Activated B cell treated with CpG ODN at 0.5 μM for 24 hours (primary cell): ENCODE measurements at regions of chr14 and their contacts with region 1.

Region 1: DNA sequence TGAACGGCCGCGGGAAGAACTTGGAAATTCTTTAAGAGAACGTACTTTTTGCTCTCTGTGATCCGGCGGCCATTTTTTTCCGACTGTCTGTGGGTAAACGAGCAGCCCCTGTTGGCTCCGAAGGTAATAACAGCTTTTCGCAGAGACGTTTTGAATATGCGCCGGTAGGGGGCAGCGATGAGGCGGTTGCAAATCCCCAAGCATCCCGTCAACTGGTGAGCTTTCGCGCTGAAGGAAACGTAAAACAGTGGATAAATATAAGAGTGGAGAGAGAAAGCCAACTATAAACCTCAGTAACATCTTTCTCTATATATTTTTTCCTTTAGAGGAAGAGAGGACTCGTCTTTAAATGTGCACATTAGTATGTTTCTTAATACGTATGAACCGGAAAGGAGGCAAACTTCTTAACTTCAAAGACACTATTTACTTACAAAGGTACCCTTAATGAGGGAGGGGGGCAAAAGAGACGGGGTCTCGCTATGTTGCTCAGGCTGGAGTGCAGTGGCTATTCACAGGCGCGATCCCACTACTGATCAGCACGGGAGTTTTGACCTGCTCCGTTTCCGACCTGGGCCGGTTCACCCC is 9.6 kb upstream of the NEMF start:
- DNase-seq: peak; percentile 77
- ATAC-seq: peak; percentile 39
- H3K4me3 Mint-ChIP-seq: no peak overlapping the region
- H3K27ac Mint-ChIP-seq: no peak overlapping the region
- H3K4me1 Mint-ChIP-seq: peaks cover 33% of the 10 kb centered on the region
- H3K27me3 Mint-ChIP-seq: peaks cover 2% of the 10 kb centered on the region
- CTCF ChIP-seq: peak; percentile 100

Region 2: DNA sequence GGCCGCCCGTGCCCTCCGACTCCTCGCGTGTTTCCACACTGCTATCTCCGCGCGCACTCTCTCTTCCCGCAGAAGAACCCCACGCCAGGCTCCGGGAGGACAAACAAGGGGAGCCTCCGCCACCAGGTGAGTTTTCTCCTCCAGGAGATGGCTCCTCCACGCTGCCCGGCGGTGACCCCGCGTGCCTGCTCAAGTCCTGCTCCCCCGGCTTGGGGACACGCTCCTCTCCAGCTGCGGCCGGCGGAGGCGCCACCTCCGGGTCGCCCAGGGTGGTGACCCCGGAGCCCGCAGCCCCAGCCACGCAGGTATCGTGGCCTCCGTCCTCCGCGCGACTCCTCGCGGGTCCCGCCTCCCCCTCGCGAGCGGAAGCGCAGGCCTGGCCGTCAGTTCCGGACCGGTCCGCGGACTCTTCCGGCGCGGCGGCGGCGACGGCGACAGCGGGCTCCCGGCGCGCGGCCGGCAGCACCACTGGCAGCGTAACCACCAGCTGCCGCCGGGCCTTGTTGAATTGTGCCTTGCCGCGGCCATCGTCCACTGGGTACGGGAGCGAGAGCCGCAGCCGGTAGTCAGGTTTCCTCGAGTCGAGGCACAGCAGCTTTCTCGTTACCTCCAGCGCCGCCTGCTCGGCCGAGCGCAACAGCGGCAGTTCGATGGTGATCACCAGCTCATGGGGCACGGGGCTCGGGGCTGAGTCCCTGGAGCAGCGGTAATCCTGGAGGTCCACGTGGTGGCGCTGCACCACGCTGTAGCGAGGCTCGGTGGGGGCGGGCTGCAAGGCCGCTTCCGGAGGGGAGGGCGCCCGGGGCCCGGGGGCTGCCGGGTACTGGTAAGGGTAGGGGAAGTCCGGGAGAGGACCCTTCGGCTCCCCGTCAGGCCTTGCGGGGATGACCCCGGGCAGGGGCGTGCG is 228.3 kb before region 1 on chr14:
- CTCF ChIA-PET with region 1: interaction called, 6 read pairs
- POLR2A ChIA-PET with region 1: interaction called, 13 read pairs
- intact Hi-C with region 1: no loop called
- DNase-seq: peak; percentile 92
- ATAC-seq: peak; percentile 80
- H3K4me3 Mint-ChIP-seq: peak overlapping the region; percentile 96
- H3K27ac Mint-ChIP-seq: peak overlapping the region; percentile 98
- H3K4me1 Mint-ChIP-seq: peaks cover 66% of the 10 kb centered on the region
- H3K27me3 Mint-ChIP-seq: no peaks in the 10 kb centered on the region
- CTCF ChIP-seq: no peak

Region 3: GRCh38 chr14:49930720-49931119 is 68.5 kb after region 1 on chr14:
- CTCF ChIA-PET with region 1: interaction called, 3 read pairs
- POLR2A ChIA-PET with region 1: interaction called, 6 read pairs
- intact Hi-C with region 1: loop called (anchors 2 kb)
- DNase-seq: no peak
- ATAC-seq: no peak
- H3K4me3 Mint-ChIP-seq: peak overlapping the region; percentile 40
- H3K27ac Mint-ChIP-seq: peak overlapping the region; percentile 88
- H3K4me1 Mint-ChIP-seq: peaks cover 34% of the 10 kb centered on the region
- H3K27me3 Mint-ChIP-seq: no peaks in the 10 kb centered on the region
- CTCF ChIP-seq: no peak

Region 4: GRCh38 chr14:50008562-50009350 is 146.6 kb after region 1 on chr14:
- CTCF ChIA-PET with region 1: interaction called, 90 read pairs
- POLR2A ChIA-PET with region 1: interaction called, 190 read pairs
- intact Hi-C with region 1: loop called (anchors 1 kb)
- DNase-seq: no peak
- ATAC-seq: peak; percentile 74
- H3K4me3 Mint-ChIP-seq: peak overlapping the region; percentile 13
- H3K27ac Mint-ChIP-seq: peak overlapping the region; percentile 84
- H3K4me1 Mint-ChIP-seq: peaks cover 64% of the 10 kb centered on the region
- H3K27me3 Mint-ChIP-seq: no peaks in the 10 kb centered on the region
- CTCF ChIP-seq: no peak

Region 5: DNA sequence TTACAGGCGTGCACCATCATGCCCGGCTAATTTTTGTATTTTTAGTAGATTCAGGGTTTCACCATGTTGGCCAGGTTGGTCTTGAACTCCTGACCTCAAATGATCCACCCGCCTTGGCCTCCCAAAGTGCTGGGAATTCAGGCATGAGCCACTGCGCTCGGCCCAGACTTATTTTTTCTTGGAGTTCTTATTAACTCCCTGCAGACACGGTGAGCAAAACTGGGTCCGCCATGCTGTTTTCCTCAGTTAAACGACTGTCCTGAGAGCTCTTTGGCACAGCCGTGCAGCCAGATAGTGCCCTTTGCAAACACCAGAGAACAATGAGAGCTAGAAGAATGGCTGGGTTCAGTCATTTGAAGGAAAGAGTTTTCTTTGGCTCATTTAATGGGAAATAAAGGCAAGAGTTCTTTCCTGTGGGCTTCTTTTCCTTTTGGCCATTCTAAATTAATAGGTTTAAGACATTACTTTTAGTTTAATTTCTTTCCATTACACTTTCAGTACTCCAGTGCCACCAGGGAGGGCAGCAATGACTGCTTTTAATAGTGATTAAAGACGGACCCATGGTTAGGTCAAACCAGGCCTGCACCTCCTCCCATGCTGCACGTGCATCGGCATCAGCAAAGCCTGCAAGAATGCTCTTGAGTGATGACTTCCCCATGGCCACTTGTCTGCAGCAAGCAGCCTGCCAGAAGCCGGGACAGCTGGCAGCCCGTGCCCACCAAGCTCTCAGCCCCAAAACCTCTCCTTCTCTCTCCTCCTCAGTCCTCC is 193.5 kb after region 1 on chr14:
- CTCF ChIA-PET with region 1: interaction called, 5 read pairs
- POLR2A ChIA-PET with region 1: interaction called, 156 read pairs
- intact Hi-C with region 1: no loop called
- DNase-seq: no peak
- ATAC-seq: peak; percentile 90
- H3K4me3 Mint-ChIP-seq: no peak overlapping the region
- H3K27ac Mint-ChIP-seq: peak overlapping the region; percentile 78
- H3K4me1 Mint-ChIP-seq: peaks cover 42% of the 10 kb centered on the region
- H3K27me3 Mint-ChIP-seq: no peaks in the 10 kb centered on the region
- CTCF ChIP-seq: no peak

Region 6: DNA sequence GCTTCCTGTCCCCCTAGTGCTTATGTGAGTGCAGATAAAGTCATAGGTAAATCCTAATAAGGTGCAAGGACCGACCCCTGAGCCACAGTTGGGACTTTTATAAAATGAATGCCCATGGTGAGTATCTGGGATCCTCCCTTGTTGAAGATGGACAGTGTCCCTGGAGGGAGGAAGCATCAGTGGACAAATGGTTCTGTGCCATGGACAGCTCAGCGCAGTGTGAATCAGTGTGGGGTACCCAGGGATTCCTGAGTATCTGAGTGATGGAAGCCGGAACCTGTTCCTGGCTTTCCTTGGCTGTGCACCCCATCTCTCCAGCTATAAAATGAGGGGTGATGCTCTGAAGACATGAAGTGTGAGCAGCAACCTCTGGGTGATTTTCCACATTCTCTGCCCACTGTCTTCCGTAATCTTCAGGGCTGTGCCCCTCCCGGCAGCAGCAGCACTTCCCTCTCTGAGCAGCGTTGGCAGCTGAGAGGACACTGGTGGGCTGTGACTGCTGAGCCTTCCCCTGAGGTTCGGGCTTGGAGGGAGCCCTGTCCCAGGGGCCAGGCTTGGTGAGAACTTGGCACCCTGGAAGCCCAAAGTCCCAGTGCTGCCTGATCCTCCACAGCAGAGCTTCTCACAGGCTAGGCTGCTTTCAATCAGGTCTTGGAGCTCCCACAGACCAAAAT is 229.2 kb after region 1 on chr14:
- CTCF ChIA-PET with region 1: interaction called, 14 read pairs
- POLR2A ChIA-PET with region 1: interaction called, 38 read pairs
- intact Hi-C with region 1: no loop called
- DNase-seq: no peak
- ATAC-seq: peak; percentile 64
- H3K4me3 Mint-ChIP-seq: peak overlapping the region; percentile 24
- H3K27ac Mint-ChIP-seq: peak overlapping the region; percentile 61
- H3K4me1 Mint-ChIP-seq: peaks cover 87% of the 10 kb centered on the region
- H3K27me3 Mint-ChIP-seq: no peaks in the 10 kb centered on the region
- CTCF ChIP-seq: no peak

Region 7: GRCh38 chr14:50116181-50116956 is 254.2 kb after region 1 on chr14 and contains the start of gene VCPKMT:
- CTCF ChIA-PET with region 1: interaction called, 11 read pairs
- POLR2A ChIA-PET with region 1: interaction called, 84 read pairs
- intact Hi-C with region 1: loop called (anchors 1 kb)
- DNase-seq: peak; percentile 97
- ATAC-seq: peak; percentile 96
- H3K4me3 Mint-ChIP-seq: peak within 1 kb of the TSS; percentile 95
- H3K27ac Mint-ChIP-seq: peak within 1 kb of the TSS; percentile 97
- H3K4me1 Mint-ChIP-seq: peaks cover 51% of the 10 kb centered on the region
- H3K27me3 Mint-ChIP-seq: no peaks in the 10 kb centered on the region
- CTCF ChIP-seq: no peak
- total RNA-seq, gene VCPKMT: 19.9 and 20.8 TPM in 2 replicates